ENCODE measurements at regions of chr12 and their contacts with region 1.

Region 1: GRCh38 chr12:56315622-56316473 is at the start of gene CNPY2:
- DNase-seq: peak; percentile 97
- ATAC-seq: peak; percentile 95
- H3K4me3 ChIP-seq: peak within 1 kb of the TSS; percentile 97
- H3K27ac ChIP-seq: peak within 1 kb of the TSS; percentile 92
- H3K4me1 ChIP-seq: peaks cover 3% of the 10 kb centered on the region
- H3K27me3 ChIP-seq: no peaks in the 10 kb centered on the region
- CTCF ChIP-seq: peak in 1 of 3 experiments; percentile 50; a peak in 2 of 6 replicates
- EP300 ChIP-seq: no peak
- POLR2A ChIP-seq: peak; percentile 97
- RAD21 ChIP-seq: peak; percentile 55
- polyA plus RNA-seq, gene CNPY2: 25.0 to 50.3 TPM

Region 2: GRCh38 chr12:56224102-56224701 is 91.6 kb before region 1 on chr12 and contains the start of gene NABP2:
- CTCF ChIA-PET with region 1: interaction called, 9 read pairs
- POLR2A ChIA-PET with region 1: interaction called, 10 read pairs
- RAD21 ChIA-PET with region 1: interaction called, 7 read pairs
- SMC1A ChIA-PET with region 1: interaction called, 4 read pairs
- in situ Hi-C with region 1: no loop called
- intact Hi-C with region 1: no loop called
- DNase-seq: peak; percentile 89
- ATAC-seq: peak; percentile 90
- H3K4me3 ChIP-seq: peak within 1 kb of the TSS; percentile 97
- H3K27ac ChIP-seq: peak within 1 kb of the TSS; percentile 65
- H3K4me1 ChIP-seq: 0 out of 2 replicates have a peak, but pooled peaks cover 3% of the 10 kb centered on the region
- H3K27me3 ChIP-seq: no peaks in the 10 kb centered on the region
- CTCF ChIP-seq: peak; percentile 65 to 86 (median 85)
- EP300 ChIP-seq: 0 out of 4 replicates have a peak, but pooled peaks of 1 of the 2 experiments have one; percentile 7
- POLR2A ChIP-seq: peak; percentile 78
- RAD21 ChIP-seq: peak; percentile 49; the same call in 1 of the 2 replicates
- polyA plus RNA-seq, gene NABP2: 20.7 to 29.5 TPM

Region 3: GRCh38 chr12:56333679-56334489 is 18.0 kb after region 1 on chr12 and contains the start of gene PAN2:
- CTCF ChIA-PET with region 1: interaction called, 20 read pairs
- POLR2A ChIA-PET with region 1: interaction called, 24 read pairs
- RAD21 ChIA-PET with region 1: interaction called, 7 read pairs
- SMC1A ChIA-PET with region 1: interaction called, 3 read pairs
- in situ Hi-C with region 1: no loop called
- intact Hi-C with region 1: loop called (anchors 1 kb)
- DNase-seq: peak; percentile 89
- ATAC-seq: peak; percentile 97
- H3K4me3 ChIP-seq: peak within 1 kb of the TSS; percentile 97
- H3K27ac ChIP-seq: peak within 1 kb of the TSS; percentile 99
- H3K4me1 ChIP-seq: peaks cover 24% of the 10 kb centered on the region
- H3K27me3 ChIP-seq: no peaks in the 10 kb centered on the region
- CTCF ChIP-seq: peak; percentile 37 to 47 (median 43); a peak in 5 of 6 replicates
- EP300 ChIP-seq: 0 out of 4 replicates have a peak, but pooled peaks have one; percentile 6 to 29
- POLR2A ChIP-seq: peak; percentile 73
- RAD21 ChIP-seq: peak; percentile 33; the same call in 1 of the 2 replicates
- polyA plus RNA-seq, gene PAN2: 14.4 to 14.5 TPM

Region 4: GRCh38 chr12:56448860-56449621 is 133.2 kb after region 1 on chr12 and contains the start of gene TIMELESS:
- CTCF ChIA-PET with region 1: interaction called, 12 read pairs
- POLR2A ChIA-PET with region 1: interaction called, 3 read pairs
- RAD21 ChIA-PET with region 1: interaction called, 9 read pairs
- SMC1A ChIA-PET with region 1: interaction called, 14 read pairs
- in situ Hi-C with region 1: no loop called
- intact Hi-C with region 1: no loop called
- DNase-seq: peak; percentile 77
- ATAC-seq: peak; percentile 98
- H3K4me3 ChIP-seq: peak within 1 kb of the TSS; percentile 91
- H3K27ac ChIP-seq: peak within 1 kb of the TSS; percentile 75
- H3K4me1 ChIP-seq: no peaks in the 10 kb centered on the region
- H3K27me3 ChIP-seq: no peaks in the 10 kb centered on the region
- CTCF ChIP-seq: no peak
- EP300 ChIP-seq: no peak
- POLR2A ChIP-seq: peak; percentile 91
- RAD21 ChIP-seq: no peak
- polyA plus RNA-seq, gene TIMELESS: 10.4 to 20.5 TPM

Measured in GM12878 (cell line).